PC-9 (cell line): ENCODE measurements at regions of chr1 and their contacts with region 1.

Region 1: GRCh38 chr1:161032409-161032808 is 6.4 kb downstream of the TSTD1 start:
- DNase-seq: no peak
- H3K4me3 ChIP-seq: no peak overlapping the region
- H3K27ac ChIP-seq: peak overlapping the region; percentile 68
- H3K4me1 ChIP-seq: peaks cover 28% of the 10 kb centered on the region
- H3K27me3 ChIP-seq: no peaks in the 10 kb centered on the region
- CTCF ChIP-seq: no peak

Region 2: GRCh38 chr1:161132410-161133219 is 100.2 kb after region 1 on chr1 and contains the start of gene DEDD:
- CTCF ChIA-PET with region 1: no interaction called
- POLR2A ChIA-PET with region 1: interaction called, 24 read pairs
- intact Hi-C with region 1: no loop called
- DNase-seq: peak; percentile 84 to 92
- H3K4me3 ChIP-seq: peak within 1 kb of the TSS; percentile 66
- H3K27ac ChIP-seq: peak within 1 kb of the TSS; percentile 91
- H3K4me1 ChIP-seq: peaks cover 33% of the 10 kb centered on the region
- H3K27me3 ChIP-seq: no peaks in the 10 kb centered on the region
- CTCF ChIP-seq: no peak
- total RNA-seq, gene DEDD: 26.7 and 29.8 TPM in 2 replicates

Region 3: GRCh38 chr1:161290779-161291178 is 258.4 kb after region 1 on chr1:
- CTCF ChIA-PET with region 1: interaction called, 10 read pairs
- POLR2A ChIA-PET with region 1: no interaction called
- intact Hi-C with region 1: no loop called
- DNase-seq: no peak
- H3K4me3 ChIP-seq: no peak overlapping the region
- H3K27ac ChIP-seq: no peak overlapping the region
- H3K4me1 ChIP-seq: no peaks in the 10 kb centered on the region
- H3K27me3 ChIP-seq: peaks cover 13% of the 10 kb centered on the region; the same call in 1 of the 2 replicates
- CTCF ChIP-seq: no peak